Activated CD4-positive, alpha-beta T cell treated with anti-CD3 and anti-CD28 coated beads, Interleukin-2, amount 10 ng/mL, durations not matched to agents 24 days and 14 days (primary cell): ENCODE measurements at regions of chr11 and their contacts with region 1.

Region 1: GRCh38 chr11:36441610-36442208 is 68.4 kb downstream of the TRAF6 start:
- DNase-seq: no peak
- H3K4me3 Mint-ChIP-seq: no peak overlapping the region
- H3K27ac Mint-ChIP-seq: no peak overlapping the region
- H3K4me1 Mint-ChIP-seq: peaks cover 18% of the 10 kb centered on the region
- H3K27me3 Mint-ChIP-seq: peaks cover 4% of the 10 kb centered on the region

Region 2: GRCh38 chr11:36390963-36391471 is 50.7 kb before region 1 on chr11:
- intact Hi-C with region 1: loop called (anchors 2 kb)
- DNase-seq: no peak
- H3K4me3 Mint-ChIP-seq: peak overlapping the region; percentile 47
- H3K27ac Mint-ChIP-seq: peak overlapping the region; percentile 80
- H3K4me1 Mint-ChIP-seq: peaks cover 64% of the 10 kb centered on the region
- H3K27me3 Mint-ChIP-seq: no peaks in the 10 kb centered on the region

Region 3: DNA sequence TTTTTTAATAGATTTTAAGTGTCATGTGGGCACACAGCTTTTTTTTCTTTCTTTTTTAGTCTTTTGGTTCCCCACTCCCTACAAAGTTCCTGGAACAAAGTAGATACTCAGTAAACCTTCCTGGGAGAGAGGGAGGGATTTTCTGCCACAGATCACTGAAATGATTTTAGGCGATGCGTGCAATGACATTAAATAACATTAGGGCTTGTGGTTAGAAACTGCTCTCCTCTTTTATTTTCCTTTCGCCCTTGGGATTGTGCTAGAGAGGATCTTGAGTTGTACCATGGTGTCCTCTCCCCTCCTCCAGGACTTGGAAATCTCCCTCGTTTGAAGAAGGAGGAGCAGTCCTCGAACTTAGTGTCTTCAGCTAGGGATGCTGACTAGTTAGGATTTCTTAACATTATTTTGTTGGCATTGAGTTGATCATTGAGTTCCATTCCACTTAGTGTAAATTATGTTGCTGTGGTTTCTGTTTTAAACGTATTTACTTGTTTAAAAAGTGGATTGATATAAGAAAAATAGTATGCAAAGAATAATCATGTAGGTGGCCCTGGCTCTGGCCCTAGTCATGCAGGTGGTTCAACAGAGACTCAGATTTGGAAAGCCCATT is 20.1 kb before region 1 on chr11:
- intact Hi-C with region 1: loop called (anchors 1 kb)
- DNase-seq: no peak
- H3K4me3 Mint-ChIP-seq: peak overlapping the region; percentile 75
- H3K27ac Mint-ChIP-seq: peak overlapping the region; percentile 91
- H3K4me1 Mint-ChIP-seq: peaks cover 63% of the 10 kb centered on the region
- H3K27me3 Mint-ChIP-seq: no peaks in the 10 kb centered on the region

Region 4: GRCh38 chr11:36431429-36432092 is 10.1 kb before region 1 on chr11:
- intact Hi-C with region 1: loop called (anchors 1 kb)
- DNase-seq: peak; percentile 70
- H3K4me3 Mint-ChIP-seq: peak overlapping the region; percentile 51
- H3K27ac Mint-ChIP-seq: peak overlapping the region; percentile 49
- H3K4me1 Mint-ChIP-seq: peaks cover 14% of the 10 kb centered on the region
- H3K27me3 Mint-ChIP-seq: no peaks in the 10 kb centered on the region